Psoas muscle (tissue), 8 donors: ENCODE measurements at regions of chr17 and their contacts with region 1.

Region 1: DNA sequence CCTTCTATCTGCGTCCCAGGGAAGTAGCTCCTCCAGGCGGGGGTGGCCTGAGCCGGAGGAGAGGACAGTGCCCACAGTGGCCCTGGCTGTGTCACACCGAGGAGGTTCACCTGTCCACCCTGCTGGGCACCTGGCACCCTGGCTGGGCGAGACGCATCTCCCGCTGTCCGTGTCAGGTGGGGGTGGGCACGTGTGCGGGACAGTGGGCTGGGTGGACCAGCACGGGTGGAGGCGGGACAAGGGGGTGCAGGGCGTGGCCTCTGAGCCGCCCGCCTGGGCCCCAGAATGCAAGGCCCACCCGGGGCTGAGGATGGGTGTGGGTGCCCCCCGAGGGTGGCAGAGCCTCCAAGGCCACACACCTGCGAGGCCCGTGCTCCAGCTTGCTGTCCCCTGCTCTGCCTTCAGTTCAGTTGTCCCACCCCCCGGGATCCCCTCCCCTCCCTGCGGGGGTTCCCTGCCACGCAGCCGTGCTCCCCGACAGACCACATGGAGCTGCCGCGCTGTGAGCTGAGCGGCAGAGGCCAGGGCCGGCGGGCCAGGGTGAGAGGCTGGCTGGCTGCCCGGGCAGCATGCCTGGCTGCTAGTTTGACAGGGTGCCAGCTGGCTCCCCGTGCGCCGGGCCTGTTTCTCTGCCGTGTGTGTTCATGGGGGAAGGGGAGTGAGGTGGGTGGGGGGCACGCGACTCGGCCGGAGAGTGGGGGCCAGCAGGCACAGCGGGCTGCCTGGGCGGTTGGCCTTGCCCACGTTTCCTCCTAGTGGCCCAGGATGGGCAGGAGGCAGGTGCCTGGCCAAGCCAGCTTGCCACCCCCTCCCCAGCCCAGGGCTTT is 33.9 kb downstream of the BAHCC1 start:
- DNase-seq: peak; percentile 79 to 84
- ATAC-seq: peak; percentile 29 to 55 (median 44)
- H3K4me3 ChIP-seq: peak overlapping the region; percentile 44
- H3K27ac ChIP-seq: peak overlapping the region; percentile 71
- H3K4me1 ChIP-seq: peaks cover 43% of the 10 kb centered on the region
- H3K27me3 ChIP-seq: no peaks in the 10 kb centered on the region
- CTCF ChIP-seq: no peak

Region 2: DNA sequence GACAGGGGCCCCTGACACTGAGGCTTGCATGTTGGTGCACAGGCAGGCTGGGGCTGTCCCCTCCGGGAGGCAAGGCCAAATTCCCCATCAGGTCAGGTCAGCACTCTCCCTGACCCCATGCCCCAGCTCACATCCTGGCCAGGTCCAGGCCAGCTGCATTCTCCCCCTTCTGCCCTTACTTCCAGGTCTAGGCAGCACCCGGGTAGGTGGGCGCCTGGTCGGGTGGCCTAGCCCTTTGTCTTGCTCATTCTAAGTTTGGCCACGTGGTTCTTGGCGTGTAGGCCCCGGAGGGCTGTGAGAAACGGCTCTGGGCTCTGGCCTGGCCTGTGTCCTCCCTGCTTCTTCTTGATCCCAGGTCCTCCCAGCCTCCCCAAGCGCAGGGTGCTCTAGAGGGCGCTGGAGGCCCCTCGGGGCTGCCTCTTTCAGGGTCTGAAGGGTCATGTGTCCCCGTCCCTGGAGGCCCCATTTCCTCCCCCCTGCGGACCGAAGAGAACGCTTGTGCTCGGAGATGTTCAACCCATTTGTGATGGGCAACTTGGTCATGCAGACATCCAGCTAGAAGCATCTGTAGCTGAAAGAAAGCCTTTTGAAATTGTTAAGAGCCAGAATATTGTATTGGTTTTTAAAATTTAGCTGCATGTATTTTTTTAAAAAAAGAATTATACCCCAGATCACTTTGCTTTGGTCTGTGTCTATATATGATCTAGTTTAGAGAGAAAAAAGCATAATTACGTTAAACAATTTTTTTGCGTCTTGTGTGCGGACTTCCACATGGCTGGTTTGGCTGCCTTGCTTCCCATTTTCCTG is 27.2 kb before region 1 on chr17:
- intact Hi-C with region 1: loop called in 1 of 2 experiments (anchors 1 kb)
- DNase-seq: peak; percentile 62 to 70
- ATAC-seq: peak in 2 of 4 donors; percentile 17 to 24
- H3K4me3 ChIP-seq: peak overlapping the region; percentile 76
- H3K27ac ChIP-seq: peak overlapping the region; percentile 99
- H3K4me1 ChIP-seq: peaks cover 62% of the 10 kb centered on the region
- H3K27me3 ChIP-seq: no peaks in the 10 kb centered on the region
- CTCF ChIP-seq: peak; percentile 12

Region 3: GRCh38 chr17:81471804-81472456 is 42.8 kb after region 1 on chr17:
- intact Hi-C with region 1: loop called (anchors 5 kb)
- DNase-seq: peak; percentile 60 to 89
- ATAC-seq: peak; percentile 51 to 85 (median 68)
- H3K4me3 ChIP-seq: peak overlapping the region; percentile 23
- H3K27ac ChIP-seq: peak overlapping the region; percentile 10
- H3K4me1 ChIP-seq: no peaks in the 10 kb centered on the region
- H3K27me3 ChIP-seq: no peaks in the 10 kb centered on the region
- CTCF ChIP-seq: no peak